Natural killer cell (primary cell): ENCODE measurements at regions of chr9 and their contacts with region 1.

Region 1: GRCh38 chr9:16726718-16727451 is 143.6 kb downstream of the BNC2 start:
- DNase-seq: no peak
- ATAC-seq: peak; percentile 46 to 76 (median 48)
- H3K4me3 ChIP-seq: no peak overlapping the region
- H3K4me3 Mint-ChIP-seq: peak overlapping the region; percentile 90
- H3K27ac ChIP-seq: no peak overlapping the region
- H3K27ac Mint-ChIP-seq: peak overlapping the region; percentile 14 to 70
- H3K4me1 ChIP-seq: peaks cover 6% of the 10 kb centered on the region
- H3K4me1 Mint-ChIP-seq: peaks cover 31 to 33% of the 10 kb centered on the region in 2 donors
- H3K27me3 ChIP-seq: peaks cover 17% of the 10 kb centered on the region
- H3K27me3 Mint-ChIP-seq: peaks cover 24 to 28% of the 10 kb centered on the region in 2 donors
- CTCF ChIP-seq: no peak

Region 2: GRCh38 chr9:16743375-16743774 is 16.5 kb after region 1 on chr9:
- intact Hi-C with region 1: loop called (anchors 2 kb)
- DNase-seq: no peak
- ATAC-seq: peak in 2 of 3 donors; percentile 27 to 74
- H3K4me3 ChIP-seq: no peak overlapping the region
- H3K4me3 Mint-ChIP-seq: peak overlapping the region; percentile 47
- H3K27ac ChIP-seq: no peak overlapping the region
- H3K27ac Mint-ChIP-seq: no peak overlapping the region
- H3K4me1 ChIP-seq: peaks cover 4% of the 10 kb centered on the region
- H3K4me1 Mint-ChIP-seq: peaks cover 36 to 50% of the 10 kb centered on the region in 2 donors
- H3K27me3 ChIP-seq: peaks cover 2% of the 10 kb centered on the region
- H3K27me3 Mint-ChIP-seq: peaks cover 4 to 11% of the 10 kb centered on the region in 2 donors
- CTCF ChIP-seq: no peak

Region 3: DNA sequence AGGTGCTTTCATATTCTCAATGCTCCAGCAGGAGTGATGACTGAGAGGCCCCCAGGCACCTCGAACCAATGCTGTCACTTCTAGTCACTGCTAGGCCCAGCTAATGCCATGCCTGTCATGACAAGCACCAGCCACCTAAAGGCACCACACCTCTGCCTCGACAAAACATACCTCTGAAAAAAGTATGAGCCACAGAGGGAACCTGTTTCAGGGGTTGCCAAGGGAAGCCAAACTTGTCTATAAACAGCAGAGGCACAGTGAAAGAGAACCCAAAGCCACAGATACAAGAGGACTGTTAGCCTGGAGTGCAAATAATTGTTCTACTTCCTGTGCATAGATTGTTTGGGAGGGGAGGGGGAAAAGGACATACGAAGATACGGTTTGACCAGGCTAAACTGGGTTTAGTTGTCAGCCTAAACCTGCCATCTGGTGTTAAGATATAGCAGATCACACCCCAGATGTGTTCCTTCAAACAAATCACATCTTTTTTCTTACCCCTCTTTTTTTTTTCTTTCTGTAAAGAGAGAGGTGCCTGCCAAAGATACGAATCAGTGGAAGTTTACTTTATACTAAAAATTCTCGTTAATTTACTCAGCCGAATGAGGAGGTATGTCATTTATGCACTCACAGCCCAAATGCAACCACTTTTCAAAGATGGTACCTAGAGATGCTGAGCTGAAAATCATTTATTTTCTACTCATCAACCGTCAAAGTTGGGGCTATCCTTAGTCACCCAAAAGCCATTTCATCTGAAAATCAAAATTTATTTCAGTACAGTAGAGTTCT is 97.9 kb after region 1 on chr9:
- intact Hi-C with region 1: no loop called
- DNase-seq: no peak
- ATAC-seq: peak; percentile 43 to 86 (median 79)
- H3K4me3 ChIP-seq: no peak overlapping the region
- H3K4me3 Mint-ChIP-seq: peak overlapping the region; percentile 17
- H3K27ac ChIP-seq: no peak overlapping the region
- H3K27ac Mint-ChIP-seq: peak overlapping the region; percentile 73 to 80
- H3K4me1 ChIP-seq: peaks cover 4% of the 10 kb centered on the region
- H3K4me1 Mint-ChIP-seq: peaks cover 39 to 48% of the 10 kb centered on the region in 2 donors
- H3K27me3 ChIP-seq: peaks cover 4% of the 10 kb centered on the region
- H3K27me3 Mint-ChIP-seq: no peaks in the 10 kb centered on the region
- CTCF ChIP-seq: no peak

Region 4: DNA sequence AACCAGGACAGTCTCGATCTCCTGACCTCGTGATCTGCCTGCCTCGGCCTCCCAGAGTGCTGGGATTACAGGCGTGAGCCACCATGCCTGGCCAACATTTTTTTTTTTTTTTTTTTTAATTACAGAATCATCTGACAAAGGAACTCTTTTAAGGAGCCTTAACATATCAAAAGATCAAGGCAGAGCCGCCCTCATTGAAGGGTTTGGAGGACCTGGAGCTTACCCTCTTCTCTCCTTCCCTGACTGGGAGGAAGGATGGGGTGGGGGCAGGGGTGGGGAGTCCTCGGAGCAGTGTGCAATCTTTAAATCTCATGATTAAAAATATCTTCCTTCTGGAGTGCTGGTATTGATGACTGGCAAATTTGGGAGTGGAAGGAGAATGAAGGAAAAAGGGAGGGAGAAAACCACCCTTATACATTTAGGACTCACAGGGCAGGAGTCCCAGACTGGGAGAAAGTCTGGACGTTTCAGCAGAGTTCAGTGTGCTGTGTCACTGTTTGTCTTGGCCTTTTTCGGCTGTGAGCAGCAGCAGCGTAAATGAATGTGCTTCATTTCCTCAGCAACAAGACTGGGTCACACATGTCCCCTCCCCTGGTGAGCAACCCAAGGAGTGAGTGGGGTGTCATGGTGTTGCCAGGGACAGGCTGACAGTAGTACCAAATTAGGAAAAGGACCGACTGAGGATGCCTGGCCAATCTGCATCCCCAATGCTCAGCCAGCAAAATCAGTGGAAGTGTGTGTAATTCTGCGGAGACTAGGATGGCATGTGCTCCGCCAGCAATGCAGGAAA is 258.9 kb after region 1 on chr9:
- intact Hi-C with region 1: no loop called
- DNase-seq: no peak
- ATAC-seq: no peak
- H3K4me3 ChIP-seq: no peak overlapping the region
- H3K4me3 Mint-ChIP-seq: no peak overlapping the region
- H3K27ac ChIP-seq: no peak overlapping the region
- H3K27ac Mint-ChIP-seq: no peak overlapping the region
- H3K4me1 ChIP-seq: no peaks in the 10 kb centered on the region
- H3K4me1 Mint-ChIP-seq: peaks cover 11% of the 10 kb centered on the region in 2 donors
- H3K27me3 ChIP-seq: no peaks in the 10 kb centered on the region
- H3K27me3 Mint-ChIP-seq: peaks cover 9 to 25% of the 10 kb centered on the region in 2 donors
- CTCF ChIP-seq: no peak